ENCODE measurements at regions of chr1 and their contacts with region 1.

Region 1: DNA sequence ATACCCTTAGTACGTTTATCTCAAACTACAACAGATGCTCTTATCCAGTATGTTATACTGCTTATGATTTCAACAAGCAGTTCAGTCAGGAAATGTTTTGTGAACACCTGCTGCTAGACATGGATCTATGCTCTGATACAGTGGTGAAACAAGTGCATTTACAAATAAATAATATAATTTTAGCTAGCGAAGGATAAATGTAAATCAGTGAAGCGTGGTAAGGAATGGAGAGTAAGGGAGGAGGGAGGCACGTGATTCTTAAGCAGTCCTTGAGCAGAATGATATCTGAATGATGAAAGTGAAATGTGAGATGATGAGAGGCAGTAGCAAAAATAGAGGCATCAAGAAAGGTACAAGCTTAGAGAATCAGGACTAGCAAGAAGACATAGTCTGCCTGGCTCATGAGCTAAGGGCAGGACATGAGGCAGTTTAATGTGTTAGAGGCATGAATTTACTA is 6.3 kb downstream of the TSNAX start:
- DNase-seq: no peak
- ATAC-seq: no peak
- H3K4me3 ChIP-seq: no peak overlapping the region
- H3K4me3 Mint-ChIP-seq: no peak overlapping the region
- H3K27ac ChIP-seq: no peak overlapping the region
- H3K27ac Mint-ChIP-seq: no peak overlapping the region
- H3K4me1 ChIP-seq: peaks cover 9 to 23% of the 10 kb centered on the region in 2 experiments
- H3K4me1 Mint-ChIP-seq: peaks cover 37 to 54% (median 53%) of the 10 kb centered on the region in 3 donors
- H3K27me3 ChIP-seq: no peaks in the 10 kb centered on the region
- H3K27me3 Mint-ChIP-seq: no peaks in the 10 kb centered on the region

Region 2: GRCh38 chr1:231770506-231771175 is 235.9 kb after region 1 on chr1:
- CTCF ChIA-PET with region 1: no interaction called
- POLR2A ChIA-PET with region 1: no interaction called
- DNase-seq: no peak
- ATAC-seq: no peak
- H3K4me3 ChIP-seq: no peak overlapping the region
- H3K4me3 Mint-ChIP-seq: no peak overlapping the region
- H3K27ac ChIP-seq: no peak overlapping the region
- H3K27ac Mint-ChIP-seq: no peak overlapping the region
- H3K4me1 ChIP-seq: no peaks in the 10 kb centered on the region
- H3K4me1 Mint-ChIP-seq: no peaks in the 10 kb centered on the region
- H3K27me3 ChIP-seq: no peaks in the 10 kb centered on the region
- H3K27me3 Mint-ChIP-seq: no peaks in the 10 kb centered on the region

Region 3: GRCh38 chr1:233127157-233127556 is 1592.4 kb after region 1 on chr1:
- CTCF ChIA-PET with region 1: no interaction called
- POLR2A ChIA-PET with region 1: interaction called in 1 of 2 experiments, 13 read pairs
- DNase-seq: no peak
- ATAC-seq: no peak
- H3K4me3 ChIP-seq: no peak overlapping the region
- H3K4me3 Mint-ChIP-seq: no peak overlapping the region
- H3K27ac ChIP-seq: no peak overlapping the region
- H3K27ac Mint-ChIP-seq: no peak overlapping the region
- H3K4me1 ChIP-seq: no peaks in the 10 kb centered on the region
- H3K4me1 Mint-ChIP-seq: no peaks in the 10 kb centered on the region
- H3K27me3 ChIP-seq: no peaks in the 10 kb centered on the region
- H3K27me3 Mint-ChIP-seq: no peaks in the 10 kb centered on the region